Natural killer cell (primary cell): ENCODE measurements at regions of chr20 and their contacts with region 1.

Region 1: GRCh38 chr20:37042986-37043972 is 52.5 kb downstream of the RBL1 start:
- DNase-seq: peak; percentile 37 to 63
- ATAC-seq: peak; percentile 69 to 74 (median 71)
- H3K4me3 ChIP-seq: peak overlapping the region; percentile 42
- H3K4me3 Mint-ChIP-seq: peak overlapping the region; percentile 84
- H3K27ac ChIP-seq: peak overlapping the region; percentile 69
- H3K27ac Mint-ChIP-seq: peak overlapping the region; percentile 86 to 93
- H3K4me1 ChIP-seq: peaks cover 21% of the 10 kb centered on the region
- H3K4me1 Mint-ChIP-seq: peaks cover 28 to 36% of the 10 kb centered on the region in 2 donors
- H3K27me3 ChIP-seq: no peaks in the 10 kb centered on the region
- H3K27me3 Mint-ChIP-seq: no peaks in the 10 kb centered on the region
- CTCF ChIP-seq: no peak

Region 2: GRCh38 chr20:36951198-36951976 is 91.9 kb before region 1 on chr20 and contains the start of gene SAMHD1:
- intact Hi-C with region 1: loop called (anchors 5 kb)
- DNase-seq: peak; percentile 86 to 91
- ATAC-seq: peak; percentile 82 to 93 (median 91)
- H3K4me3 ChIP-seq: peak within 1 kb of the TSS; percentile 100
- H3K4me3 Mint-ChIP-seq: peak within 1 kb of the TSS; percentile 97
- H3K27ac ChIP-seq: peak within 1 kb of the TSS; percentile 91
- H3K27ac Mint-ChIP-seq: peak within 1 kb of the TSS; percentile 86 to 90
- H3K4me1 ChIP-seq: peaks cover 74% of the 10 kb centered on the region
- H3K4me1 Mint-ChIP-seq: peaks cover 46 to 47% of the 10 kb centered on the region in 2 donors
- H3K27me3 ChIP-seq: no peaks in the 10 kb centered on the region
- H3K27me3 Mint-ChIP-seq: no peaks in the 10 kb centered on the region
- CTCF ChIP-seq: no peak
- total RNA-seq, gene SAMHD1: 237 to 279 (median 270) TPM

Region 3: GRCh38 chr20:37032077-37032476 is 11.2 kb before region 1 on chr20:
- intact Hi-C with region 1: no loop called
- DNase-seq: no peak
- ATAC-seq: no peak
- H3K4me3 ChIP-seq: no peak overlapping the region
- H3K4me3 Mint-ChIP-seq: no peak overlapping the region
- H3K27ac ChIP-seq: no peak overlapping the region
- H3K27ac Mint-ChIP-seq: no peak overlapping the region
- H3K4me1 ChIP-seq: peaks cover 3% of the 10 kb centered on the region
- H3K4me1 Mint-ChIP-seq: peaks cover 4 to 6% of the 10 kb centered on the region in 2 donors
- H3K27me3 ChIP-seq: no peaks in the 10 kb centered on the region
- H3K27me3 Mint-ChIP-seq: no peaks in the 10 kb centered on the region
- CTCF ChIP-seq: no peak